GM12878 (cell line): ENCODE measurements at regions of chr5 and their contacts with region 1.

Region 1: GRCh38 chr5:140244525-140245025 is 58.3 kb downstream of the PFDN1 start:
- DNase-seq: no peak
- ATAC-seq: peak; percentile 92
- H3K4me3 ChIP-seq: no peak overlapping the region
- H3K27ac ChIP-seq: no peak overlapping the region
- H3K4me1 ChIP-seq: peaks cover 4% of the 10 kb centered on the region; the same call in 1 of the 2 replicates
- H3K27me3 ChIP-seq: no peaks in the 10 kb centered on the region
- CTCF ChIP-seq: peak; percentile 70 to 90 (median 85); a peak in 5 of 6 replicates
- EP300 ChIP-seq: no peak
- POLR2A ChIP-seq: no peak
- RAD21 ChIP-seq: peak; percentile 84

Region 2: DNA sequence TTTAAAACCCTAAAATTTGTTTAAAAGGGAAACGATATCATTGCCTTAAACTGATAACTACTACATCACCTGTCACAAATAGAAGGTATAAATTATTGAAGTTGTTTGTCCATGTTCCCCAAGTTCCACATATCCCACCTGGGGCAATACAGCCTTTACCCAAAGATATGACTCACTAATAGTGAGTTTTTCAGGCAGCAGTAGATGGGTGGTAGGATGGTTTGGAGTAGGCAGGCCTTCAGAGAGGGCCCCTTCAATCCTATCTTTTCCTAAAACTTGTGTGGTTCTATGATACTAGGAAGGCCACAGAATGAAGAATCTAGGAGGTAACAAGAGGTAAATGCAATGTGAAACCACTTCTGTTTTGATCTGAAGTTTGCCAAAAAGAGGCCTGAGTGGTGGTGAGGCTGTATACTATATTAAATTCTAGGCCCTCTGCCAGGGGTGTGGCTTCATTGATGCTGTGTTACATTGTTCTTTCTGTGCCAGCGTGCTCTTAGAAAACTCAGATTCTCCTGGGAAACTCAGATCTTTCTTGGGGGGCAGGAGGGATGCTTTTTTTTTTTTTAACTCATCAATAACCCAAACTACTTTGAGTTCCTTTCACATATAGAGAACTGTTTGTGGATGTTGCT is 62.4 kb before region 1 on chr5:
- CTCF ChIA-PET with region 1: interaction called, 17 read pairs
- POLR2A ChIA-PET with region 1: no interaction called
- RAD21 ChIA-PET with region 1: interaction called, 5 read pairs
- SMC1A ChIA-PET with region 1: interaction called, 10 read pairs
- in situ Hi-C with region 1: no loop called
- intact Hi-C with region 1: no loop called
- DNase-seq: no peak
- ATAC-seq: peak; percentile 38
- H3K4me3 ChIP-seq: no peak overlapping the region
- H3K27ac ChIP-seq: no peak overlapping the region
- H3K4me1 ChIP-seq: peaks cover 18% of the 10 kb centered on the region
- H3K27me3 ChIP-seq: no peaks in the 10 kb centered on the region
- CTCF ChIP-seq: no peak
- EP300 ChIP-seq: no peak
- POLR2A ChIP-seq: no peak
- RAD21 ChIP-seq: no peak

Region 3: GRCh38 chr5:140261403-140262171 is 17.0 kb after region 1 on chr5:
- CTCF ChIA-PET with region 1: interaction called, 62 read pairs
- POLR2A ChIA-PET with region 1: interaction called, 5 read pairs
- RAD21 ChIA-PET with region 1: interaction called, 6 read pairs
- SMC1A ChIA-PET with region 1: interaction called, 9 read pairs
- in situ Hi-C with region 1: no loop called
- intact Hi-C with region 1: no loop called
- DNase-seq: no peak
- ATAC-seq: no peak
- H3K4me3 ChIP-seq: no peak overlapping the region
- H3K27ac ChIP-seq: no peak overlapping the region
- H3K4me1 ChIP-seq: peaks cover 15% of the 10 kb centered on the region
- H3K27me3 ChIP-seq: no peaks in the 10 kb centered on the region
- CTCF ChIP-seq: no peak
- EP300 ChIP-seq: no peak
- POLR2A ChIP-seq: no peak
- RAD21 ChIP-seq: no peak

Region 4: GRCh38 chr5:140351609-140352334 is 107.2 kb after region 1 on chr5:
- CTCF ChIA-PET with region 1: interaction called, 774 read pairs
- POLR2A ChIA-PET with region 1: interaction called, 4 read pairs
- RAD21 ChIA-PET with region 1: interaction called, 131 read pairs
- SMC1A ChIA-PET with region 1: interaction called, 345 read pairs
- in situ Hi-C with region 1: no loop called
- intact Hi-C with region 1: loop called (anchors 1 kb)
- DNase-seq: no peak
- ATAC-seq: peak; percentile 86
- H3K4me3 ChIP-seq: no peak overlapping the region
- H3K27ac ChIP-seq: no peak overlapping the region
- H3K4me1 ChIP-seq: peaks cover 6% of the 10 kb centered on the region
- H3K27me3 ChIP-seq: no peaks in the 10 kb centered on the region; a peak in 1 of 4 replicates
- CTCF ChIP-seq: peak; percentile 70 to 89 (median 76)
- EP300 ChIP-seq: no peak
- POLR2A ChIP-seq: no peak
- RAD21 ChIP-seq: peak; percentile 89

Region 5: GRCh38 chr5:140710899-140711552 is 466.5 kb after region 1 on chr5:
- CTCF ChIA-PET with region 1: interaction called, 4 read pairs
- POLR2A ChIA-PET with region 1: no interaction called
- RAD21 ChIA-PET with region 1: interaction called, 3 read pairs
- SMC1A ChIA-PET with region 1: interaction called, 4 read pairs
- in situ Hi-C with region 1: loop called (anchors 5 kb)
- intact Hi-C with region 1: loop called (anchors 5 kb)
- DNase-seq: peak; percentile 99
- ATAC-seq: peak; percentile 93
- H3K4me3 ChIP-seq: peak overlapping the region; percentile 66
- H3K27ac ChIP-seq: peak overlapping the region; percentile 67
- H3K4me1 ChIP-seq: no peaks in the 10 kb centered on the region
- H3K27me3 ChIP-seq: no peaks in the 10 kb centered on the region
- CTCF ChIP-seq: no peak
- EP300 ChIP-seq: peak; percentile 78 to 85; a peak in 3 of 4 replicates
- POLR2A ChIP-seq: peak; percentile 72
- RAD21 ChIP-seq: no peak

Region 6: GRCh38 chr5:140753561-140753960 is 509.0 kb after region 1 on chr5:
- CTCF ChIA-PET with region 1: no interaction called
- POLR2A ChIA-PET with region 1: no interaction called
- RAD21 ChIA-PET with region 1: no interaction called
- SMC1A ChIA-PET with region 1: no interaction called
- in situ Hi-C with region 1: no loop called
- intact Hi-C with region 1: no loop called
- DNase-seq: no peak
- ATAC-seq: no peak
- H3K4me3 ChIP-seq: no peak overlapping the region
- H3K27ac ChIP-seq: no peak overlapping the region
- H3K4me1 ChIP-seq: no peaks in the 10 kb centered on the region
- H3K27me3 ChIP-seq: no peaks in the 10 kb centered on the region
- CTCF ChIP-seq: no peak
- EP300 ChIP-seq: no peak
- POLR2A ChIP-seq: no peak
- RAD21 ChIP-seq: no peak